WTC11 (cell line): ENCODE measurements at regions of chr11 and their contacts with region 1.

Region 1: DNA sequence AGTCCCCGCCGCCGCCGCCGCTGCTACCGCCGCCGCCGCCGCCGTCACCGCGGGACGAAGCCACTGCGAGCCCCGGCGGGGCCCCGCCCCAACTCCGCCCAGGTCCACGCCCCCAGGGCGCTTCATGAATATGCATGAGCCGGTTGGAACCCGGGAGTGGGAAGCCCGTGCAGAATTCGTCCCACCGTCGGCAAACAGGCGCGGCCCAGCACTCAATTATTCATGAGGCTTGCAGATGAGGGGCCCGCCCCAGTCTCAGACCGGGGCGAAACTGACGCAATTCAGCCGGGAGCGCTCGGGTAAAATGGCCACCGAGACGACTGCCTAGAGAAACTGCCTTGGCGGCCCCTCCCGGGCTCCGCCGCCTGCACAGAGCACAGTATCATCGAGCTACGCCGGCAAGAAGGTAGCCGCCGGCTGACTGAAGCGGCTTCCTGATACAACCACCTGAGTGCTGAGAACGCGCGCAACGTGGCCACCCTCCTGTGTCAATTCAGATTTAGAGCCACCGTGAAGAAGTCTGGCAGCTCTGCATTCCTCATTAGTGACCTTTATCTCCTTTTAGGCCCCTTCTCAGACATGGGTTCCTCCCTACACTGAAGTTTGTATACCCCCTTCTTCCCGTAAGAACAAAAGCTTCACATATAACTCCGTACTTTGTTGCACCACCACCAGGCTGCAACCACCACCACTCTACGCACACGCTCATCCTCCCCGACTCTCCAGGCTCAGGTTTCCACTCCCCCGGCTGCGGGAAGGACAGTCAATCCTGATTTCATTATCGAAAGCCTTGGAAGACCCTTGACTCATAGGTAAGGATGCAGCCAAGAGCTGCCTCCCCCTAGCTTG is at the start of gene TNKS1BP1:
- DNase-seq: peak; percentile 97
- ATAC-seq: peak; percentile 86
- H3K4me3 Mint-ChIP-seq: peak within 1 kb of the TSS; percentile 88
- H3K27ac Mint-ChIP-seq: peak within 1 kb of the TSS; percentile 100
- H3K4me1 Mint-ChIP-seq: peaks cover 49% of the 10 kb centered on the region
- H3K27me3 Mint-ChIP-seq: no peaks in the 10 kb centered on the region
- CTCF ChIP-seq: no peak
- total RNA-seq, gene TNKS1BP1: 109 to 127 TPM (median 125 TPM) in 3 replicates

Region 2: DNA sequence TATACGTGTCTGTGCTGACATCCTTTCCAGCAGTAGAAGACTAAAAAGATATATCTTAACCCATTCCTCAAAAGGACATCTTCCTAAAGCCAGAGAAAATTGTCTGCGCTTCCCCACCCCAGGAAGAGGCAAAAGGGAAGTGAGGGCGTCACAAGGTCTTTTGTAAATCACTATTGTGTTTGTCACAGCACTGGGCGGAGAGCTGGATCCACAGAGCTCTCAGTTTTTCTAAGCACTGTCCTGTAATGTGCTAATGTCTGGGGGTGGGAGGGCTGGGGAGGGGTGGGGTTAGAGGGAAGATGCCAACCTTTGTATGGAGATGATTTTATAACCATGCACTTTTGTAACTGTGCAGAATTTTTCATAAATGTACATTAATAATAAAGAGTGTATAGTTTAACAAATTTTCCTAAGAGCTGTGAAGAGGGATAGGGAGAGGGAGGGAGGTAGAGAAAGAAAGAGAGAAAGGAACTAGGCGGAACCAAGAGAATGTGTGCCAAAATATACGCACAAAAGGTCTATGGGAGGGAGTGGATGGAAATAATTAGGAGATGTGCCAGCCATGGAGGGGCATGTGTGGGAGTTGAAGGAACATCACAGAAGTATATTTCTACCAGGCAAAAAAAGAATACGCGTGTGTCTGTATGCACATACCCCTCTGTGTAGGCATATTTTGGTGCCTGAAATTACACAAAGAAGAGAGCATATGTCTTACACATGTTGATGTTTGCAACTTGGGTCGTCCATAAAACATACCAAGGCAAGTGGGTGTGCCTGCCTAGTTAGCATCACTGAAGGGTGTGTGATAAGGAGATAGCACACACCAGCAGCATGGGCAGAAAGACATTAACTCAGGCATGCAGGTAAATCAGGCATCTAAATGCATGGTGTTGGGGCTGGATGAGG is 133.5 kb before region 1 on chr11:
- CTCF ChIA-PET with region 1: no interaction called
- POLR2A ChIA-PET with region 1: no interaction called
- DNase-seq: no peak
- ATAC-seq: peak; percentile 51
- H3K4me3 Mint-ChIP-seq: no peak overlapping the region
- H3K27ac Mint-ChIP-seq: no peak overlapping the region
- H3K4me1 Mint-ChIP-seq: peaks cover 24% of the 10 kb centered on the region
- H3K27me3 Mint-ChIP-seq: no peaks in the 10 kb centered on the region; the same call in 1 of the 2 replicates
- CTCF ChIP-seq: no peak

Region 3: GRCh38 chr11:57311109-57311936 is 13.8 kb before region 1 on chr11:
- CTCF ChIA-PET with region 1: interaction called, 15 read pairs
- POLR2A ChIA-PET with region 1: interaction called, 29 read pairs
- DNase-seq: peak; percentile 93
- ATAC-seq: peak; percentile 96
- H3K4me3 Mint-ChIP-seq: peak overlapping the region; percentile 66
- H3K27ac Mint-ChIP-seq: peak overlapping the region; percentile 96
- H3K4me1 Mint-ChIP-seq: peaks cover 23% of the 10 kb centered on the region
- H3K27me3 Mint-ChIP-seq: no peaks in the 10 kb centered on the region
- CTCF ChIP-seq: no peak

Region 4: GRCh38 chr11:57335343-57336110 is 10.4 kb after region 1 on chr11 and contains the start of gene SSRP1:
- CTCF ChIA-PET with region 1: interaction called, 20 read pairs
- POLR2A ChIA-PET with region 1: interaction called, 13 read pairs
- DNase-seq: peak; percentile 79
- ATAC-seq: peak; percentile 94
- H3K4me3 Mint-ChIP-seq: peak within 1 kb of the TSS; percentile 94
- H3K27ac Mint-ChIP-seq: peak within 1 kb of the TSS; percentile 96
- H3K4me1 Mint-ChIP-seq: peaks cover 47% of the 10 kb centered on the region
- H3K27me3 Mint-ChIP-seq: peaks cover 11% of the 10 kb centered on the region
- CTCF ChIP-seq: no peak
- total RNA-seq, gene SSRP1: 218 to 228 TPM (median 223 TPM) in 3 replicates